ENCODE measurements at regions of chr2 and their contacts with region 1.

Region 1: GRCh38 chr2:14428056-14428455 is 204.5 kb upstream of the LRATD1 start:
- DNase-seq: peak; percentile 38
- H3K4me3 ChIP-seq: no peak overlapping the region
- H3K27ac ChIP-seq: no peak overlapping the region
- H3K4me1 ChIP-seq: no peaks in the 10 kb centered on the region
- H3K27me3 ChIP-seq: no peaks in the 10 kb centered on the region
- CTCF ChIP-seq: no peak

Region 2: DNA sequence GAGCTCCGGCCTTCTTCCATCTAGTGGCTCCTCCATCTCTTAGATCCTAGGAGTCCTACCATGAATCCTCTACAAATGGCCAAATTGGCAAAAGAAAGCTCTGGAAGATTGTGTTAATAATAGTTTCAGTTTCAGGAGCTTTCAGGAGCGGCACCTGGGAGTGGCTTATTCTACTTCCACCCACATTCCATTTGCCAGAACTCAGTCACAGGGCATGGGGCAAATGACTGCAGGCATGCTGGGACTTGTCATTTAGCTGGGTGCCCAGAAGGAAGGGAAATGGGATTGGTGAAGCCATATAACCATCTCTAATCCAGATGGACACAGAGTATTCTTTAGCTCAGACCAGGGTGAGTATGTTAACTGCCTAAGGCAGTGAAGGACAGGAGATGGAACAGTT is 200.8 kb after region 1 on chr2:
- intact Hi-C with region 1: loop called (anchors 5 kb)
- DNase-seq: peak; percentile 80
- H3K4me3 ChIP-seq: no peak overlapping the region
- H3K27ac ChIP-seq: peak overlapping the region; percentile 19
- H3K4me1 ChIP-seq: peaks cover 4% of the 10 kb centered on the region
- H3K27me3 ChIP-seq: no peaks in the 10 kb centered on the region
- CTCF ChIP-seq: no peak